ENCODE measurements at regions of chr11 and their contacts with region 1.

Region 1: GRCh38 chr11:65180877-65181568 is 705 bp upstream of the CAPN1 start:
- DNase-seq: peak; percentile 29
- ATAC-seq: peak; percentile 66
- H3K4me3 ChIP-seq: peak overlapping the region; percentile 81 to 95
- H3K27ac ChIP-seq: peak overlapping the region; percentile 100
- H3K4me1 ChIP-seq: peaks cover 23 to 35% of the 10 kb centered on the region in 2 experiments
- H3K27me3 ChIP-seq: no peaks in the 10 kb centered on the region
- CTCF ChIP-seq: peak in 2 of 3 experiments; percentile 49 to 56; a peak in 5 of 6 replicates
- POLR2A ChIP-seq: no peak
- RAD21 ChIP-seq: peak; percentile 86

Region 2: GRCh38 chr11:65111744-65112414 is 69.1 kb before region 1 on chr11 and contains the start of gene TM7SF2:
- CTCF ChIA-PET with region 1: interaction called, 14 read pairs
- POLR2A ChIA-PET with region 1: interaction called, 10 read pairs
- RAD21 ChIA-PET with region 1: interaction called in 1 of 2 experiments, 8 read pairs
- intact Hi-C with region 1: loop called (anchors 5 kb)
- DNase-seq: peak; percentile 89
- ATAC-seq: peak; percentile 81
- H3K4me3 ChIP-seq: peak within 1 kb of the TSS; percentile 66 to 76
- H3K27ac ChIP-seq: peak within 1 kb of the TSS; percentile 82
- H3K4me1 ChIP-seq: peaks cover 22 to 50% of the 10 kb centered on the region in 2 experiments
- H3K27me3 ChIP-seq: no peaks in the 10 kb centered on the region
- CTCF ChIP-seq: no peak
- POLR2A ChIP-seq: peak; percentile 99
- RAD21 ChIP-seq: no peak
- total RNA-seq, gene TM7SF2: 52.9 TPM

Region 3: DNA sequence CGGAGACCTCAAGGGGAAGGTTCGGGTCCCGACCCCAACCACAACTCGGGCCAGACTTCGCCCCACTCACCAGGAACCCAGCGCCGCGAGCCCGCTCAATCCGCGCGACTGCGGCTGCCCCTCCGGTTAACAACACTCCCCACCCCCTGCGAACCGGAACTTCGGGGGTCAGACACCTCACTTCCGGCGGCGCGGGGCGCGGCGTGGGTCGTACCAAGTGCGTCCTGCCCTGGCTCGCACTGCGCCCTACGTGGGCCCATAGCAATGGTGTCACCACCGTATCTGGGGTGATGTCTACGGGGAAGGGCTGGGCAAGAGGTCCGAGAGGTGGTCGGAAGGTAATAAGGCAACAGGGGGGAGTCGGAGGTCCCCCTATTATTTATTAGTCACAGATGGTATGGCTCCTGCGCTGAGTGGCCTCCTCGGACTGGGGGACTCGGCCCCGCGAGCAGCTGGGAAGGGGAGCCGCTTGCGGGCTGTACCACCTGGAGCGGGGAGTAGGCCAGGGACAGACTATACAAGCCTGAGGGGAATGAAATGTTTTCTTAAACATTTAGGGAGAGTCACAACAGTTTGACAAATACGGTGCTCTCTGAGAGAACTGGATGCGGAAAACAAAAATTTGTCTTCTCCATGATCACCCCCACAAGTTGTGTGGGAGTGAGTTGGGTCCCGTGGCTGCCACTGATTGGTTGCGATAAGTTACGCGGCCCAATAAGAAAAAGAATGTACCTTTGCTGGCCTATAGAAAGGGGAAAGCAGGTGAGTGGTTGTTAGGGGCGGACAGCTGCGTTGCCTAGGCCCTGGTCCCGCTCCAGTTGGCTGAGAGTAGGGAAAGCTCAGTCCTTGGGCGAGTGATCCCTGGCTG is 46.4 kb before region 1 on chr11 and contains the start of gene SYVN1:
- CTCF ChIA-PET with region 1: interaction called, 9 read pairs
- POLR2A ChIA-PET with region 1: interaction called, 20 read pairs
- RAD21 ChIA-PET with region 1: interaction called in 1 of 2 experiments, 4 read pairs
- intact Hi-C with region 1: loop called (anchors 2 kb)
- DNase-seq: peak; percentile 95
- ATAC-seq: peak; percentile 88
- H3K4me3 ChIP-seq: peak within 1 kb of the TSS; percentile 81 to 98
- H3K27ac ChIP-seq: peak within 1 kb of the TSS; percentile 89
- H3K4me1 ChIP-seq: peaks cover 9 to 28% of the 10 kb centered on the region in 2 experiments; a peak in 3 of 4 replicates
- H3K27me3 ChIP-seq: no peaks in the 10 kb centered on the region
- CTCF ChIP-seq: no peak
- POLR2A ChIP-seq: peak; percentile 26
- RAD21 ChIP-seq: no peak
- total RNA-seq, gene SYVN1: 45.9 TPM

Region 4: GRCh38 chr11:65169164-65169641 is 11.8 kb before region 1 on chr11:
- CTCF ChIA-PET with region 1: interaction called, 7 read pairs
- POLR2A ChIA-PET with region 1: interaction called, 13 read pairs
- RAD21 ChIA-PET with region 1: no interaction called
- intact Hi-C with region 1: no loop called
- DNase-seq: no peak
- ATAC-seq: no peak
- H3K4me3 ChIP-seq: no peak overlapping the region
- H3K27ac ChIP-seq: no peak overlapping the region
- H3K4me1 ChIP-seq: peaks cover 9 to 16% of the 10 kb centered on the region in 2 experiments; a peak in 3 of 4 replicates
- H3K27me3 ChIP-seq: no peaks in the 10 kb centered on the region
- CTCF ChIP-seq: no peak
- POLR2A ChIP-seq: no peak
- RAD21 ChIP-seq: no peak

Region 5: GRCh38 chr11:65251476-65251875 is 70.5 kb after region 1 on chr11:
- CTCF ChIA-PET with region 1: no interaction called
- POLR2A ChIA-PET with region 1: no interaction called
- RAD21 ChIA-PET with region 1: no interaction called
- intact Hi-C with region 1: loop called (anchors 5 kb)
- DNase-seq: no peak
- ATAC-seq: no peak
- H3K4me3 ChIP-seq: no peak overlapping the region
- H3K27ac ChIP-seq: no peak overlapping the region
- H3K4me1 ChIP-seq: peaks cover 3 to 6% of the 10 kb centered on the region in 2 experiments; a peak in 1 of 4 replicates
- H3K27me3 ChIP-seq: no peaks in the 10 kb centered on the region
- CTCF ChIP-seq: 0 out of 6 replicates have a peak, but pooled peaks of 1 of the 3 experiments have one; percentile 1
- POLR2A ChIP-seq: no peak
- RAD21 ChIP-seq: no peak

Measured in HCT116 (cell line).